Lower leg skin (tissue), 4 donors: ENCODE measurements at regions of chr20 and their contacts with region 1.

Region 1: DNA sequence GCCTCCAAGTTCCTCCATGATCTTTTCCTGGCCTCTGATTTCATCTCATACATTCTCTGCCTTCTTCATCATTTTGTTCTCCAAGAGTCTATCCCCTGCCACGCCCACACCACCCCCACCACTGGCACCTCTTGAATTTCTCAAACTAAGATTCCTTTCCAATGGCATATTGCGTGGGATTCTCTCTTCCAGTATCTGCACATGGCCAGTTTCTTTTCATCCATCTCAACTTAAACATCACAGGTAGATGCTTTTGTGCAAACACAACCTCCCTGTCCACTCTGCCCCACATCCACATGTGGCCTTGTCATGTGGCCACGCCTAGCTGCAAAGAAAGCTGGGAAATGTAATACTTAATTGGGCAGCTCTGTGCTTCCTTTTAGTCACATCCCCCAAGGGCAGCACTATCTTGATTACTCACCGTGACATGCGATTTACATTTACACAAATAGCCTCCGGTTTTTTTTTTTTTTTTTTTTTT is 33.4 kb upstream of the ZMYND8 start:
- DNase-seq: peak in 1 of 2 donors; percentile 25
- H3K4me3 ChIP-seq: no peak overlapping the region
- CTCF ChIP-seq: no peak
- POLR2A ChIP-seq: no peak

Region 2: GRCh38 chr20:46757754-46758678 is 631.9 kb before region 1 on chr20:
- intact Hi-C with region 1: loop called (anchors 10 kb)
- DNase-seq: peak; percentile 30 to 90
- H3K4me3 ChIP-seq: no peak overlapping the region
- CTCF ChIP-seq: peak in 1 of 3 donors; percentile 74
- POLR2A ChIP-seq: no peak

Region 3: GRCh38 chr20:47205577-47206498 is 184.1 kb before region 1 on chr20:
- intact Hi-C with region 1: loop called (anchors 10 kb)
- DNase-seq: no peak
- H3K4me3 ChIP-seq: no peak overlapping the region
- CTCF ChIP-seq: no peak
- POLR2A ChIP-seq: no peak

Region 4: DNA sequence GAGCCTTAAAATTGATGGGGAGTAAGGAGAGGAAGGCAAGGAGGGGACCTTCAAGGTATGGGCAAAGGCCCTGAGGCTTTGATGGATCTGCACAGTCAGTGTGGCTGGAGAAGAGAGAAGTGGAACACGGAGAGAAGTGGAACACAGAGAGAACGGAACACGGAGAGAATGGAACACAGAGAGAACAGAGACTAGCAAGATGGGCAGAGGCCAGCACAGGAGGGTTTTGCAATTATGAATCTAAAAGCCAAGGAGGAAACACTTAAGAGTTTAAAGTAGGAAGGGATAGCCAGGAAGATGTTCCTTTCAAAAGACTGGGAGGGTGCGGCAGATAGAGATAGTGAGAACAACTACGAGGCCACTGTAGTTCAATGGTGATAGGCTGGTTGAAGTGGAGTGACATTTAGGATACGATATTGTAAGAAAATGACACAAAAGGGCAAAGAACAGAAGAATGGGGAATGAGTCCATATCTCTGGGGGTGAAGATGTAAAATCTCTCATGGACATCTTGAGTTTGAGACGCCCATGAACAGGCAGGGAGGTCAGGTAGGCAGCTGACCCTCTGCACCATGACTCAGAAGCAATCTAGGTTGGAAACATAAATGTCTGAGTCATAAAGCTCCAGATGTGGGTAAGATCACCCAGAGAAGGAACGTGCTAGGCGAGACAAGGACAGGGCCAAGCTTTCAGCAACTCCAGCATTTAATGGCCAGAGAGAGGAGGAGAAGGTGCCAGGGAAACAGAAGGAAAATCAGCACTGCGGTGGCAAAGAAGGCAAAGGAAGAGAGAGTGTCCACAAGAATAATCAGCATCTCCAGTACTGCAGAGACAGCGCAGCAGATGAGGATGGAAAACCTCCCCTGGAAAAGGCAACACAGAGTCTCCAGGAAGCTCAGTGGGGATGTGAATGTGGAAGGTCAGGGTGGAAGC is 58.7 kb before region 1 on chr20:
- intact Hi-C with region 1: no loop called
- DNase-seq: no peak
- H3K4me3 ChIP-seq: no peak overlapping the region
- CTCF ChIP-seq: no peak
- POLR2A ChIP-seq: no peak

Region 5: DNA sequence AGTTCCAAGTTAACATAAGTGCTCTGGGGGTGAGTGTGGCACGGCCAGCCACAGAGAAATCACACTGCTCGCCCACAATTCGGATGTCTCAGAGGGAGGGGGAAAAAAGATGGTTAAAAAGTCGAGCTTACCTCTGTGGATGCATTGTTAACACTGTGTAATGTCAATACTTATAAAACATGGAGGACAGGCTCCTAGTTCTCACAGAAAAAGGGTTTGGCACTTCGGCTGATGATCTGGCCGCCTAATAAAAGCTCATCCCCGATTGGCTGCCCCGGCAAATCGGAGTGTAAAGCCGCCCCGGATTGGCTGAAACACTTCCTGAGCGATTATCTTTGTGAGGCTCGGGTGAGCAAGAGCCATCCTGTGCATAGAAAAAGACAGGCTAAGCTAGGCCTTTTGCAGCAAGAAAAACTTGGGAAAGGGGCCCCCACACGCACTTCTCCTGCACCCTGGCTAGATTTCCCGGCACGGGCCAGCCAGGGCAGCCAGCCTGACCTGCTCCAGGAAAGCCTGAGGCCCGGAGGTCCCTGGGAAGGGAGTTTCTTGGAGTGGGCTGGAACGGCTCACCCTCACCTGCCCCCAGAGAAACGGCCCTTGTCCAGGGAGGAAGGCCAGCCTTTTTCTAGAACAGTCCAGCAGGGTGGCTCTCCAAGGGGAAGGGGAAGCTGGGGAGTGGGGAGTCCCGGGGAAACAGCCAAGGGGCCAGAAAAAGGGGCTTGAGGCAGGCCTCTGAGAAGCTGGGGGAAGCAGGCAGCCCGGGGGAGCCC is 33.2 kb before region 1 on chr20 and contains the start of gene ZMYND8:
- intact Hi-C with region 1: no loop called
- DNase-seq: peak; percentile 95 to 99
- H3K4me3 ChIP-seq: no peak within 1 kb of the TSS
- CTCF ChIP-seq: no peak
- POLR2A ChIP-seq: no peak
- total RNA-seq, gene ZMYND8: 42.2 to 79.0 (median 65.4) TPM